WTC11 (cell line): ENCODE measurements at regions of chr7 and their contacts with region 1.

Region 1: GRCh38 chr7:99808766-99809165 is 19.0 kb upstream of the CYP3A43 start:
- DNase-seq: no peak
- ATAC-seq: no peak
- H3K4me3 Mint-ChIP-seq: peak overlapping the region; percentile 21; the same call in 1 of the 2 replicates
- H3K27ac Mint-ChIP-seq: no peak overlapping the region
- H3K4me1 Mint-ChIP-seq: peaks cover 6% of the 10 kb centered on the region
- H3K27me3 Mint-ChIP-seq: peaks cover 5% of the 10 kb centered on the region; the same call in 1 of the 2 replicates
- CTCF ChIP-seq: no peak

Region 2: DNA sequence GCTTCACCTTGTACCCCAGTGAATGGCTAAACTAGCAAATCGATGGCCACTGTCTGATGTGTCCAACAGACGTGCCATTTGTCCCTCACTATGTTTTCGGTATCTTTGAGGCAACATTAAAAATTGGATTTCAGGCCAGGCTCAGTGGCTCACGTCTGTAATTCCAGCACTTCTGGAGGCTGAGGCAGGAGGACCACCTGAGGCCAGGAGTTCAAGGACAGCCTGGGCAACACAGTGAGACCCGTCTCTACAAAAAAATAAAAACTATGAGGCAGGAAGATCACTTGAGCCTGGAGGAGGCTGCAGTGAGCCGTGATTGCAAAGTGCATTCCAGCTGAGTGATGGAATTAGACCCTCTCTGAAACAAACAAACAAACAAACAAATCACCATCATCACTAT is 264.9 kb before region 1 on chr7:
- CTCF ChIA-PET with region 1: no interaction called
- POLR2A ChIA-PET with region 1: interaction called, 10 read pairs
- DNase-seq: no peak
- ATAC-seq: no peak
- H3K4me3 Mint-ChIP-seq: no peak overlapping the region
- H3K27ac Mint-ChIP-seq: no peak overlapping the region
- H3K4me1 Mint-ChIP-seq: no peaks in the 10 kb centered on the region
- H3K27me3 Mint-ChIP-seq: peaks cover 14% of the 10 kb centered on the region
- CTCF ChIP-seq: no peak